A549 (cell line): ENCODE measurements at regions of chr10 and their contacts with region 1.

Region 1: DNA sequence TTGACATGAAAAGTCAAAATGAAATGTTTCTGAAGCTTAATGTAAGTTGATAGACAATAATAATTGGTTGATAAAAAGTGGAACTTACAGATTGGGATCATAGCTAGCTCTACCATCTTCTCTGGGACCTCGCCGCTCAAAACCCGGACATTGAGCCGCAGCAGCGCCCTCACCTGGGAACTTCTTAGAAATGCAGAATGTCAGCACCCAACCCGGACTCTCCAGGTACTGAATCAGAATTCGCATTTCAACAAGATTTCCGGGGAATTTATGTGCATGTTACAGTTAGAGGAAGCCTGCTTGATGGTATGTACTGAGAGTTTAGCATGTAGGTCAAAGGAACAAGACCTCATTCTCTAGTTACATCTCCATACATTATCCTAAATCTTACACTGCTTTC is 36.7 kb upstream of the ABLIM1 start:
- DNase-seq: peak; percentile 57 to 73
- ATAC-seq: peak; percentile 79 to 89
- H3K4me3 ChIP-seq: no peak overlapping the region
- H3K27ac ChIP-seq: peak overlapping the region in 1 of 2 experiments; percentile 8; a peak in 1 of 6 replicates
- H3K4me1 ChIP-seq: peaks cover 46% of the 10 kb centered on the region
- CTCF ChIP-seq: peak; percentile 74
- EP300 ChIP-seq: no peak
- POLR2A ChIP-seq: no peak
- RAD21 ChIP-seq: peak; percentile 84

Region 2: DNA sequence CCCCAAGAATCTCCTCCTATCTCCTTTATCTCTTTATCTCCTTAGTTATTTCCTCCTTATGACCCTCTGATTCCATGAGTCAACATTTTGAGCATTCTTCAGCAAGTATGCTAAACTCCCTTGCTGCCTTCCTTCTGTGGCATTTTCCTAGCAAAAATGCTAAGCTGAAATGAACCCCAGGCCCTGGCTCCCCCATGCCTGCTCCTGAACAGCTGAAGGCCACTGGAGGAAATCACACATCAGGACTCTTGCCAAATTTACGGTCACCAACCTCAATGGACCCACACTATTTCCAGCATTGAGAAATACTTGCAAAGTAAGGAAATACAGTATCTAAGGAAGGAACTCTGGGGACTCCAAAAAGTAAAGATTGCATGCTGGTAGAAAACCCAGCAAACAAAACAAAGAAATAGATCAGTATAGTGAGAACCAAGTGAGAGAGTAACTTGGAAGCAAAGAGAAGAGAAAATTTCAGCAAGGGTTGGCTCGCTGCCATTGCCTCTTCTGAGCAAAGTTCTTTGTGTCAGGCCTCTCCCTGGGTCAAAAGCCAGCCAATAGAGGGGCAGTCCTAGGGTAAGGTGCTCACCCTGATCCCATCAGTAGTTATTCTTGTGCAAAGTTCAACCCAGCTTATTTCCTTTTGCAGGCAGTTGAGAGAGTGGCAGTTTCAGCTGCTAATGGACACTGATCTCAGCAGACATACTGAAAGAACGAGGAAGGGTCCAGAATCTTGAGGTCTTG is 948.4 kb before region 1 on chr10:
- CTCF ChIA-PET with region 1: no interaction called
- POLR2A ChIA-PET with region 1: no interaction called
- DNase-seq: peak; percentile 41 to 76
- ATAC-seq: peak; percentile 84 to 89
- H3K4me3 ChIP-seq: no peak overlapping the region
- H3K27ac ChIP-seq: peak overlapping the region; percentile 51 to 70
- H3K4me1 ChIP-seq: peaks cover 38% of the 10 kb centered on the region
- CTCF ChIP-seq: no peak
- EP300 ChIP-seq: no peak
- POLR2A ChIP-seq: no peak
- RAD21 ChIP-seq: no peak

Region 3: DNA sequence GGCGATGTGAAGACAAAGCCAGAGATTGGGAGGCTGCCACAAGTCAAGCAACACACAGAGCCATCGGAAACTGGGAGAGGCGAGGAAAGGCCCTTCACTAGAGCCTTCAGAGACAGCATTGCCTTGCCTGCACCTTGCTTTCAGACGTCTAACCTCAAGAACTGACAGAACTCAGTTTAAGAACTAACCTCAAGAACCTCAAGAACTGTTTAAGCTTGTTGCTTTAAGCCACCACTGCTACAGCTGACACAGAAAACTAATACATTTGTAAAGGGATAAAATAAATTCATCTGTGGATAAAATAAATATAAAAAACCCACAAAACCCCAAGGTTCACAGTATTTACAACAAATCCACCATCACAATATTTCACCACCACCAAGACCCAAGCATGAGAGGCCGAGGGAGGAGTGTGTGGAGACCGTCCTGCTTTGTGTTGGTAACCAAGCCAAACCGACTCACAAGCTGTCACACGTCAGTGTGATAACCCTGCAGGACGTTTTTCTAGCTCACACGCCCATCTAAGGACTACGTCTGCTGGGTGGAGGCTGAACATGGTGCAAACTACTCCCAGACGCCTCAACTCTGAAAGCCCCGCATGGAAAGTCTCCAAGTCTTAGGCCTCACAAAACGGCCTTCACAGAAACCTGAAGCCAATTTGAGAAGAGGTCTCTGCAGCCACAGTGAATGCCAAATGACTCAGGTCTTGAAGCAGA is 153.5 kb before region 1 on chr10:
- CTCF ChIA-PET with region 1: interaction called, 10 read pairs
- POLR2A ChIA-PET with region 1: no interaction called
- DNase-seq: no peak
- ATAC-seq: no peak
- H3K4me3 ChIP-seq: no peak overlapping the region
- H3K27ac ChIP-seq: no peak overlapping the region
- H3K4me1 ChIP-seq: no peaks in the 10 kb centered on the region
- CTCF ChIP-seq: no peak
- EP300 ChIP-seq: no peak
- POLR2A ChIP-seq: no peak
- RAD21 ChIP-seq: no peak

Region 4: GRCh38 chr10:114631666-114632417 is 62.9 kb before region 1 on chr10:
- CTCF ChIA-PET with region 1: interaction called, 26 read pairs
- POLR2A ChIA-PET with region 1: no interaction called
- DNase-seq: peak in 1 of 2 experiments; percentile 33
- ATAC-seq: peak; percentile 54 to 62
- H3K4me3 ChIP-seq: peak overlapping the region; percentile 58
- H3K27ac ChIP-seq: peak overlapping the region; percentile 52 to 84
- H3K4me1 ChIP-seq: peaks cover 54% of the 10 kb centered on the region
- CTCF ChIP-seq: no peak
- EP300 ChIP-seq: no peak
- POLR2A ChIP-seq: no peak
- RAD21 ChIP-seq: no peak; a peak in 1 of 5 replicates

Region 5: GRCh38 chr10:114684085-114684821 is 10.5 kb before region 1 on chr10:
- CTCF ChIA-PET with region 1: interaction called, 15 read pairs
- POLR2A ChIA-PET with region 1: no interaction called
- DNase-seq: peak; percentile 47 to 69
- ATAC-seq: peak; percentile 85 to 86
- H3K4me3 ChIP-seq: peak overlapping the region; percentile 36
- H3K27ac ChIP-seq: peak overlapping the region; percentile 83 to 88
- H3K4me1 ChIP-seq: peaks cover 74% of the 10 kb centered on the region
- CTCF ChIP-seq: no peak
- EP300 ChIP-seq: no peak
- POLR2A ChIP-seq: no peak
- RAD21 ChIP-seq: no peak

Region 6: DNA sequence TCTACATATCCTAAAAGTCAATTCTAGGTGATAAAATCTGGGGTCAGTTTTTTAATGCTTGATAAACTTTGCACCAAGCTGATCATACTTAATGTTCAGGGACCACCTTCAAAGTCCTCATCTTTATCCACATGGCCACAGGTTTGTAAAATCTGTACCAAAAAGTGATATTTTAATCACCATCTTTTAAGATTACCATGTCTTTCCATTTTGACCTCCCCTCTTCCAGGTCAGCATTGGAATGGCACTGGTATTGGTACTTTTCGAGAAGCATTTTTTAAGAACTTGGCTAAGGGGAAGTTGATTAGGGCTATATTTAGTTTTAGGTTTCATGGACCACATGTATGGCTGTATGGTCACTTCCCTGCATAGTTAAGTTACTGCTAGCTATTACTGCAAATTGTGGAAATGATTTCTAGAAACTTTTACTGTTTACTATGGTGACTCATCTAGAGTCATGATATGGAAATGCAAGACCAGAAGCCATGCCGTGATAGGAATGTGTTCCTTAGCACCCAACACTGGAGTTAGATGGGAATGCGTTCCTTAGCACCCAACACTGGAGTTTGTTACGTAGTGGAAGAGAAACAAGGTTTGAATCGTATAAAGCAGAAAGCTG is 14.1 kb after region 1 on chr10:
- CTCF ChIA-PET with region 1: interaction called, 33 read pairs
- POLR2A ChIA-PET with region 1: no interaction called
- DNase-seq: peak; percentile 58 to 78
- ATAC-seq: peak; percentile 90 to 93
- H3K4me3 ChIP-seq: no peak overlapping the region
- H3K27ac ChIP-seq: peak overlapping the region; percentile 57 to 73; a peak in 5 of 6 replicates
- H3K4me1 ChIP-seq: peaks cover 34% of the 10 kb centered on the region
- CTCF ChIP-seq: no peak
- EP300 ChIP-seq: no peak
- POLR2A ChIP-seq: no peak
- RAD21 ChIP-seq: 0 out of 5 replicates have a peak, but pooled peaks of 1 of the 2 experiments have one; percentile 14

Region 7: GRCh38 chr10:114859222-114859621 is 164.5 kb after region 1 on chr10:
- CTCF ChIA-PET with region 1: no interaction called
- POLR2A ChIA-PET with region 1: no interaction called
- DNase-seq: no peak
- ATAC-seq: no peak
- H3K4me3 ChIP-seq: no peak overlapping the region
- H3K27ac ChIP-seq: no peak overlapping the region
- H3K4me1 ChIP-seq: peaks cover 41% of the 10 kb centered on the region
- CTCF ChIP-seq: no peak
- EP300 ChIP-seq: no peak
- POLR2A ChIP-seq: no peak
- RAD21 ChIP-seq: no peak